ENCODE measurements at regions of chr12 and their contacts with region 1.

Region 1: DNA sequence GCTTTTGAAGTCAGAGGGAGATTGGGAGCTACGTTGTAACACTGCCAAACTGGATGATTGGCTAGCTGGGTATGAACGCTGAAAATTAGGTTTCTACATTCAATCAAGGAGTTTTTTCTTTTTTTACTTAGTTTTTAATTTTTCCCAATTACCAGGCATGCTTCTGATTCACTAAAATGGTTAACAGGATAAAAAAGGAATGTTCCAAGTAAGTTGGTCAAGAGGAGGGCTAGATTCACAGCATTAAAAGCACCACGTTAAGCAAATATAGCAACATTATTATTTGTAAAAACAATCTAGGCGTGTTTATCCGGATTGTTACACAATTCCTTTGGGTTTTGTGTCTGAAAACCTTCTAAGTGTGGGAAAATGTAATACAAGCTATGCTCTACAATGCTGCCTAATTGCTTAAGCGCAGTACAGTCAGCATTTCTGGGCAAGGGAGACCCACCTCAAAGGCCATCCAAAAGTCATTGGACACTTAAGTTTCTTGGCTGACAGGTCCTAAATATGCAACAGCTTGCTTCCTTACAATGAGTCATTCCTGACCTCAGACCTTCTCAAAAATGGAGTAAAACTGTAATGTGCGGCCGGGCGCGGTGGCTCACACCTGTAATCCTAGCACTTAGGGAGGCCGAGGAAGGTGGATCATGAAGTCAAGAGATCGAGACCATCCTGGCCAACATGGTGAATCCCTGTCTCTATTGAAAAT is 1.2 kb downstream of the RPLP0 start:
- DNase-seq: no peak
- ATAC-seq: no peak
- H3K4me3 ChIP-seq: peak overlapping the region; percentile 59 to 99
- H3K27ac ChIP-seq: peak overlapping the region; percentile 86
- H3K4me1 ChIP-seq: peaks cover 21 to 59% of the 10 kb centered on the region in 2 experiments; a peak in 3 of 4 replicates
- H3K27me3 ChIP-seq: no peaks in the 10 kb centered on the region
- CTCF ChIP-seq: no peak
- POLR2A ChIP-seq: no peak
- RAD21 ChIP-seq: no peak

Region 2: DNA sequence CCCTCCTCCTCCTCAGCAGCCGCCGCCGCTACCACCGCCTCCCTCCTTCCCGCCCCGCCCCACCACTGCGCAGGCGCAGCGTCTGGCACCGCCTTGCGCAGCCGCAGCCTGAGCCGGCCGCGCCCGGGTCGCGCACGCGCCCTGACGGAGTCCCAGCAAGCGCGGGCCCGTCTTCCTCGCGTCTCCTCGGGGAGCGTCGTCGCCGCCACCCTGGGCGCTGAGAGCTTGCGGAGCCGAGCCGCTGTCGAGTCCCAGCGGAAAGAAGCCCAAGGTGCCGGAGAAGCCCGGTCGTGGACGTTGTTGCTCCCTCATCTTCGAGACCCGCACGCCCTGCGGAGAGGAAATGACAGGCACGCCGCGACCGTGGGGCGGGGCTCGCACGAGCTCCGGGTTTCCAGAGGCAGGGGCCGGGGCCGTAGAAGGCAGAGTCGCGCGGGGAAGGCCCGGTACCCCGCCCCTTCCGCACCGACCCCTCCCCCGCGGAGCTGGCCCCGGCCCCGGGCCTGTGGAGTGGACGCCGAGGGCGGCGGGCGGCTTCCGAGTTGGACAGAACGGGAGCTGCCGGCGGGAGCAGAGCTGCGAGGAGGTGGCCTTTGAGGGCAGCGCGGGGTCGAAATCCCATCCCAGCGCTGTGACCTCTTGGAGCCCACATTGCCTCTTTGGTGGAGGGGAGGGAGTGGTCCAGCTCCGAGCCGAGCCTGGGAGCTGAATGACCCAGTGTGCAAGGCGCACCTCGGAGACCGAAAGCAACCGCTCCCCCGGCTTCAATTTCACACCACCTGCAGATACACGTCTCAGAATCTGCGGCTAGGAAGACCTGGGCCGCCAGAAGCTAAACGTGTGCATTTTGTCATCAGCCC is 82.7 kb before region 1 on chr12:
- CTCF ChIA-PET with region 1: no interaction called
- POLR2A ChIA-PET with region 1: interaction called, 22 read pairs
- RAD21 ChIA-PET with region 1: interaction called in 1 of 2 experiments, 3 read pairs
- intact Hi-C with region 1: no loop called
- DNase-seq: peak; percentile 67
- ATAC-seq: peak; percentile 81
- H3K4me3 ChIP-seq: peak overlapping the region; percentile 60 to 65
- H3K27ac ChIP-seq: peak overlapping the region; percentile 70
- H3K4me1 ChIP-seq: peaks cover 17 to 27% of the 10 kb centered on the region in 2 experiments
- H3K27me3 ChIP-seq: no peaks in the 10 kb centered on the region
- CTCF ChIP-seq: no peak
- POLR2A ChIP-seq: peak; percentile 69
- RAD21 ChIP-seq: no peak

Region 3: DNA sequence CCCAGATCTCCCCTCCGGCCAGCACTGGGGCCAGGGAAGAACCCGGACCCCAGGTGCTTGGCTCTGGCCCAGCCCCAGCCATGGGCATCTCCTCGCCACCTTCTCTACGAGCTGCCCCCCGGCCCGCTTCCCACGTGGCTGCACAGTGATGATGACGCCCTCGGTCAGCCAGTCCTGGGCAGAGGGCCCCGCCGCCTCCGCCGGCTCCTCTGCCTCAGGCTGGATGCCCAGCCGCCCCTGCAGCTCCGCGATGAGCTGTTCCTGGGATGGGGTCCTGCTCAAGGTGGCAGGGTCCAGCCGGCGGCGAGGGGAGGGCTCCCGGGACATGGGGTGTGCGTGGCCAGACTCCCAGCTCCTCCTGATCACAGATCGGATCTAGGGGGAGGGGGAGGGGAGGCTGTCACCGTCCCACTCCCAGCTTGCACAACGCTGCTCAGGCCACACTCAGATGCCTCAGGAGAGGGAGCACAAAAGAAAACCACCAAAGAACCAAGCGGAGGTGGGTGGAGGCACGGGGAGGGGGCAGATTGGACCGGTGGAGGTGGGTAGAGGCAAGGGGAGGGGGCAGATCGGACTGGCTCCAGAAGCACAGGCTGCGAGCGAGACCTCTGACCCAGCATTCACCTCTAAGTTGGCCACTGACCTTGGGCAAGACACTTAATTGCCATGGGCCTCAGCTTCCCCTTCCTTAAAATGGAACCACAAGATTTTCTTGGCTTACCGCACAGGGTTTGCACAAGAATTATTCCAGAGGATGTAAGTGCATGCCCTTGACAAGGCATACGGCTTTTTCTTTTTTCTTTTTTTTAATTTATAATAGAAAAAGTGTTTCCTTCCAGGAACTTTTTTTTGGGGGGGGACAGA is 17.2 kb after region 1 on chr12:
- CTCF ChIA-PET with region 1: interaction called, 8 read pairs
- POLR2A ChIA-PET with region 1: interaction called, 40 read pairs
- RAD21 ChIA-PET with region 1: no interaction called
- intact Hi-C with region 1: no loop called
- DNase-seq: no peak
- ATAC-seq: no peak
- H3K4me3 ChIP-seq: no peak overlapping the region
- H3K27ac ChIP-seq: no peak overlapping the region
- H3K4me1 ChIP-seq: no peaks in the 10 kb centered on the region
- H3K27me3 ChIP-seq: no peaks in the 10 kb centered on the region
- CTCF ChIP-seq: no peak
- POLR2A ChIP-seq: no peak
- RAD21 ChIP-seq: no peak

Region 4: DNA sequence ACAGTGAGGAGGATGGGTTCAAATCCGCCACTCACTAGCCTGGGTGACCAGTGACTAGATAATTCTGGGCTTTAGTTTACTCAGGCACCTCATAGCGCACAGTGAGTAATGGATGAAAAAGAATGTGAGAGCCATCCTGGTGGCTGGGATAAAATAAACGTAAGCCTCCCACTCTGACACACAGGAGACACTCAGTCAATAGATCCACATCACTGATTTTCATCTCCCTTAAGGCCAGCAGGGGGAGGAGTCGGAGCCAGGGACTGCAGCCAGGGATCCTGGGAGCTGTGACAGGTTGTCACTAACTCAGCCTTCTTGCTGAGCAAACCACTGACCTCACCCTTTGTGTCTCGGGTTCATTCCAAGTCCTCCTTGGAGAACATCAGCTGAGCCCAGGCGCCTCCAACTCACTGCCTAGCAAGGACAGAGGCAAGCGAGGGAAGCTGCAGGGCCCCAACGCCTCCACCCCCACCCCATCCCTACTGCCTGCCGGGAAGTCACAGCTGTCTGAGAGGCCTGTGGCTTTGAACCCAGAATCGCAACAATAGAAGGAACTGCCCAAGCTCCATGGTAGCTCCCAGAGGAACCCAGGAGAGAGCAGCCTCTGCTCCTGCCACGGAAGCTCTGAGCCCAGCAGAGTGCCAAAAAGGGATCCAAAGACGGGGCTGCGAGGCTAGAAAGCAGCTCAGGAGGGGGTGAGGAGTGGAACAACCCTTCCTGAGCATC is 35.1 kb after region 1 on chr12:
- CTCF ChIA-PET with region 1: interaction called, 12 read pairs
- POLR2A ChIA-PET with region 1: interaction called, 117 read pairs
- RAD21 ChIA-PET with region 1: interaction called in 1 of 2 experiments, 3 read pairs
- intact Hi-C with region 1: no loop called
- DNase-seq: peak; percentile 61
- ATAC-seq: peak; percentile 32
- H3K4me3 ChIP-seq: peak overlapping the region in 1 of 2 experiments; percentile 11; a peak in 1 of 4 replicates
- H3K27ac ChIP-seq: peak overlapping the region; percentile 100
- H3K4me1 ChIP-seq: peaks cover 88 to 99% of the 10 kb centered on the region in 2 experiments
- H3K27me3 ChIP-seq: no peaks in the 10 kb centered on the region
- CTCF ChIP-seq: peak in 2 of 3 experiments; percentile 56 to 60; a peak in 4 of 6 replicates
- POLR2A ChIP-seq: no peak
- RAD21 ChIP-seq: no peak

Region 5: GRCh38 chr12:120265473-120266179 is 65.9 kb after region 1 on chr12 and contains the start of gene PXN:
- CTCF ChIA-PET with region 1: interaction called, 24 read pairs
- POLR2A ChIA-PET with region 1: interaction called, 112 read pairs
- RAD21 ChIA-PET with region 1: interaction called, 4 to 5 read pairs
- intact Hi-C with region 1: loop called (anchors 2 kb)
- DNase-seq: peak; percentile 67
- ATAC-seq: peak; percentile 84
- H3K4me3 ChIP-seq: peak within 1 kb of the TSS; percentile 66 to 85
- H3K27ac ChIP-seq: peak within 1 kb of the TSS; percentile 93
- H3K4me1 ChIP-seq: peaks cover 41 to 55% of the 10 kb centered on the region in 2 experiments
- H3K27me3 ChIP-seq: no peaks in the 10 kb centered on the region
- CTCF ChIP-seq: peak in 2 of 3 experiments; percentile 73 to 80; a peak in 4 of 6 replicates
- POLR2A ChIP-seq: peak; percentile 14
- RAD21 ChIP-seq: no peak
- total RNA-seq, gene PXN: 211 TPM

Region 6: DNA sequence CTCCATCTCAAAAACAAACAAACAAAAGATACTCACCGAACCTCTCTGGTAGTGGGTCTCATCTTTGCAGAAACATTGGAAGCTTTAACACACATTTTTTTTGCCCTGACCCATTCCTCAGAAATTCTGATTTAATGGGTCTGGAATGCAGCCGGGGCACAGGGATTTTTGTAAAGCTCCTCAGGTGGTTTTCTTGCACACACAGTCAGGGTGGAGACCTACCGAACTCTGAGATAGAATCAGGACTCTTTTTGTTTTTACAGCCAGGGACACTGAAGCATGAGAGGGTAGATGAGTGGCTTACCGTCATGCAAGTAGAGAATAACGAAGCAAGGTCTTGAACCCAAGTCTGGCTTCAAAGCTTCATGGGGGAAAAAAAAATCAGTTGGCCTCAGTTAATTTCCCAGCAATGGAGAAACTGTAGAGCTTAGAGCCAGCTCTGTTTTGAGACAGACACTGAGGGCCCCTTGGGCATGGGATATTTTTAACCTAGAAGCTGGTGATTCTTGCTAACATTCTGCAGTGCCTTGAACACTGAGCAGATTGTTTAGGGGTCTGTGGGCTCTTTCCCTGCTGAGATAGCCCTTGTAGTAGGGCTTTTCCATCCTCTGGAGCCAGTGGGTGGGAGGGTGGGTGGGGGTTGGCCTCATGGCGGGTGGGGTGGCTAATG is 87.2 kb after region 1 on chr12:
- CTCF ChIA-PET with region 1: interaction called, 12 read pairs
- POLR2A ChIA-PET with region 1: interaction called, 223 read pairs
- RAD21 ChIA-PET with region 1: no interaction called
- intact Hi-C with region 1: no loop called
- DNase-seq: no peak
- ATAC-seq: no peak
- H3K4me3 ChIP-seq: no peak overlapping the region
- H3K27ac ChIP-seq: no peak overlapping the region
- H3K4me1 ChIP-seq: peaks cover 13 to 35% of the 10 kb centered on the region in 2 experiments
- H3K27me3 ChIP-seq: no peaks in the 10 kb centered on the region
- CTCF ChIP-seq: no peak
- POLR2A ChIP-seq: no peak
- RAD21 ChIP-seq: no peak

Region 7: GRCh38 chr12:120314220-120314619 is 114.5 kb after region 1 on chr12:
- CTCF ChIA-PET with region 1: no interaction called
- POLR2A ChIA-PET with region 1: no interaction called
- RAD21 ChIA-PET with region 1: no interaction called
- intact Hi-C with region 1: no loop called
- DNase-seq: no peak
- ATAC-seq: peak; percentile 41
- H3K4me3 ChIP-seq: no peak overlapping the region
- H3K27ac ChIP-seq: no peak overlapping the region
- H3K4me1 ChIP-seq: peaks cover 2 to 15% of the 10 kb centered on the region in 2 experiments; a peak in 1 of 4 replicates
- H3K27me3 ChIP-seq: no peaks in the 10 kb centered on the region
- CTCF ChIP-seq: peak; percentile 41 to 75 (median 71); a peak in 5 of 6 replicates
- POLR2A ChIP-seq: no peak
- RAD21 ChIP-seq: peak; percentile 32; the same call in 1 of the 2 replicates

Region 8: GRCh38 chr12:120515496-120515895 is 315.7 kb after region 1 on chr12:
- CTCF ChIA-PET with region 1: no interaction called
- POLR2A ChIA-PET with region 1: no interaction called
- RAD21 ChIA-PET with region 1: no interaction called
- intact Hi-C with region 1: no loop called
- DNase-seq: no peak
- ATAC-seq: no peak
- H3K4me3 ChIP-seq: no peak overlapping the region
- H3K27ac ChIP-seq: no peak overlapping the region
- H3K4me1 ChIP-seq: no peaks in the 10 kb centered on the region
- H3K27me3 ChIP-seq: no peaks in the 10 kb centered on the region
- CTCF ChIP-seq: no peak
- POLR2A ChIP-seq: no peak
- RAD21 ChIP-seq: no peak

Measured in HCT116 (cell line).